OCI-LY7 (cell line): ENCODE measurements at regions of chr4 and their contacts with region 1.

Region 1: GRCh38 chr4:37977471-37978247 is 17.5 kb downstream of the PTTG2 start:
- DNase-seq: peak; percentile 85
- H3K4me3 ChIP-seq: peak overlapping the region; percentile 96
- H3K27ac ChIP-seq: peak overlapping the region; percentile 99
- H3K4me1 ChIP-seq: peaks cover 62% of the 10 kb centered on the region
- CTCF ChIP-seq: peak; percentile 74

Region 2: GRCh38 chr4:37686373-37687193 is 291.1 kb before region 1 on chr4 and contains the start of gene RELL1:
- CTCF ChIA-PET with region 1: no interaction called
- POLR2A ChIA-PET with region 1: no interaction called
- intact Hi-C with region 1: loop called (anchors 2 kb)
- DNase-seq: peak; percentile 97
- H3K4me3 ChIP-seq: peak within 1 kb of the TSS; percentile 78
- H3K27ac ChIP-seq: peak within 1 kb of the TSS; percentile 75
- H3K4me1 ChIP-seq: peaks cover 40% of the 10 kb centered on the region
- CTCF ChIP-seq: no peak
- total RNA-seq, gene RELL1: 60.7 and 62.3 TPM in 2 replicates

Region 3: GRCh38 chr4:37826295-37827029 is 151.2 kb before region 1 on chr4 and contains the start of gene PGM2:
- CTCF ChIA-PET with region 1: no interaction called
- POLR2A ChIA-PET with region 1: interaction called, 5 read pairs
- intact Hi-C with region 1: loop called (anchors 1 kb)
- DNase-seq: peak; percentile 92
- H3K4me3 ChIP-seq: peak within 1 kb of the TSS; percentile 91
- H3K27ac ChIP-seq: peak within 1 kb of the TSS; percentile 60
- H3K4me1 ChIP-seq: peaks cover 30% of the 10 kb centered on the region
- CTCF ChIP-seq: 0 out of 2 replicates have a peak, but pooled peaks have one; percentile 21
- total RNA-seq, gene PGM2: 52.7 and 67.4 TPM in 2 replicates

Region 4: DNA sequence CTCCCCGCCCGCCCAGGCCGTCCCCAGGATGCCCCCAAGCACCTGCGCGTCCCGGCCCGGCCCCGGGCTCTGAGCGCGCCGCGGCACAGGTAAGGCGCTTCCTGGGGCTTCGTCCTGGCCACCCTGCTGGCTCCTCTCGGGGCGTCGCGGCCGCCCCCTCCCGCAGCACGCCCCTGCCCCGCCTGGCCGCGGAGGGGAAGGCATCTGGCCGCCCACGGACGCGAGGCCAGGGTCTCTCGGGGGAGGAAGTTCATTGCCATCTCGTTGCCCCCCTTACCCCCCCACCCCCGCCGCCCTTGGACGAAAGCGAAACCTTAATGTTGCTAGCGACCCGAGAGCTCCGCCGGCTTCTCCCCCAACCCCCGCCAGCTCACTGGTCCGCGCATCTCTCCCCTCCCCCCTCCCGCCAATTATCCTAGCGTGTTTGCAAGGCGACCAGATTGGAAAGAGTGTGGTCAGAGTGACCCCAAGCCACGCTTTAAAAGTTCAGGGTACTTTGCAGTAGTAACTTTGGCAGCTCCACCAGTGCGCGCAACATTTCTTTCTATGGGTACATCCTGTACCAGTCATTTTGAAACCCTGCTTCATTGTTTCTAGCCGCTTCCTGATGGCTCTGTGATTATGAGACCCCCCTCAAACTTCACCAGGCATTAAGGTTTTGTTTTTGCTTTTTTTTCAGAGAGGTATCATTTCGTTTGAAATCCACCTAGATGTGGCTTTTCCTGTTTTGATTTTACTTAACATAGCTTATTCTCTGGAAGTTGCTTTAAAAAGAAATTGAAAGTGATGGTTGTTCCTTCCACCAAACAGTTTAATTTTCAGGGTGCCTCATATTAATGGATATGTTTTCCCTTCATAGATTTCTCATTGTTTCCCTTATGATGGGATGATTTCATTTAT is 86.1 kb before region 1 on chr4:
- CTCF ChIA-PET with region 1: no interaction called
- POLR2A ChIA-PET with region 1: interaction called, 10 read pairs
- intact Hi-C with region 1: loop called (anchors 2 kb)
- DNase-seq: peak; percentile 78
- H3K4me3 ChIP-seq: peak overlapping the region; percentile 76
- H3K27ac ChIP-seq: peak overlapping the region; percentile 78
- H3K4me1 ChIP-seq: peaks cover 33% of the 10 kb centered on the region
- CTCF ChIP-seq: peak; percentile 37; the same call in 1 of the 2 replicates

Region 5: GRCh38 chr4:38015886-38016515 is 38.3 kb after region 1 on chr4:
- CTCF ChIA-PET with region 1: interaction called, 3 read pairs
- POLR2A ChIA-PET with region 1: interaction called, 4 read pairs
- intact Hi-C with region 1: loop called (anchors 5 kb)
- DNase-seq: no peak
- H3K4me3 ChIP-seq: no peak overlapping the region
- H3K27ac ChIP-seq: no peak overlapping the region
- H3K4me1 ChIP-seq: peaks cover 9% of the 10 kb centered on the region
- CTCF ChIP-seq: no peak

Region 6: GRCh38 chr4:38768968-38769394 is 791.3 kb after region 1 on chr4:
- CTCF ChIA-PET with region 1: no interaction called
- POLR2A ChIA-PET with region 1: no interaction called
- intact Hi-C with region 1: loop called (anchors 10 kb)
- DNase-seq: no peak
- H3K4me3 ChIP-seq: no peak overlapping the region
- H3K27ac ChIP-seq: no peak overlapping the region
- H3K4me1 ChIP-seq: peaks cover 23% of the 10 kb centered on the region
- CTCF ChIP-seq: no peak